HCT116 (cell line): ENCODE measurements at regions of chr10 and their contacts with region 1.

Region 1: GRCh38 chr10:91632671-91633550 is at the start of gene PPP1R3C:
- DNase-seq: no peak
- ATAC-seq: no peak
- H3K4me3 ChIP-seq: no peak within 1 kb of the TSS
- H3K27ac ChIP-seq: no peak within 1 kb of the TSS
- H3K4me1 ChIP-seq: no peaks in the 10 kb centered on the region
- H3K27me3 ChIP-seq: no peaks in the 10 kb centered on the region
- CTCF ChIP-seq: no peak
- POLR2A ChIP-seq: no peak
- RAD21 ChIP-seq: no peak
- total RNA-seq, gene PPP1R3C: 0.20 TPM

Region 2: DNA sequence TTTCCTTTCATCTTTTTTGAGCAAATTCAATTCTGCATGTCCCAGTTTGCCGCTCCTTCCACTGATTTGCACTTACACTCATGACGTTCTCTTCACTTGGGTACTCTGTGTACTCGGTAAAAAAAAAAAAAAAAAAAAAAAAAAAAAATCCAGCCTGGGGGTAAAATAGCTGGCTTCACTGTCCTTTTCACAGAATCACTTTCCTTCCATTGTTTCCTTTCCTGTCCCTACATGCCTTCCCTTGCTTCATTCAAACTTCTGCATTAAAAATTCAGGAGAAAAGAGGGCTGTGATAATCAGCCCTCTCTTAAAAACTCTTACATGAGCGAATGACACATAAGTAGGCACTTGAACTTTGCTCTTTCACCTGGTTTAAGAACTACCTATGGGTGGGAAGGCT is 720.7 kb before region 1 on chr10:
- CTCF ChIA-PET with region 1: interaction called, 5 read pairs
- POLR2A ChIA-PET with region 1: no interaction called
- RAD21 ChIA-PET with region 1: no interaction called
- intact Hi-C with region 1: loop called (anchors 10 kb)
- DNase-seq: no peak
- ATAC-seq: no peak
- H3K4me3 ChIP-seq: no peak overlapping the region
- H3K27ac ChIP-seq: no peak overlapping the region
- H3K4me1 ChIP-seq: peaks cover 0 to 2% of the 10 kb centered on the region in 2 experiments; a peak in 1 of 4 replicates
- H3K27me3 ChIP-seq: no peaks in the 10 kb centered on the region
- CTCF ChIP-seq: no peak
- POLR2A ChIP-seq: no peak
- RAD21 ChIP-seq: no peak

Region 3: GRCh38 chr10:91389636-91390512 is 243.0 kb before region 1 on chr10:
- CTCF ChIA-PET with region 1: interaction called, 11 read pairs
- POLR2A ChIA-PET with region 1: no interaction called
- RAD21 ChIA-PET with region 1: no interaction called
- intact Hi-C with region 1: loop called (anchors 2 kb)
- DNase-seq: peak; percentile 37
- ATAC-seq: peak; percentile 84
- H3K4me3 ChIP-seq: peak overlapping the region in 1 of 2 experiments; percentile 12; a peak in 1 of 4 replicates
- H3K27ac ChIP-seq: no peak overlapping the region
- H3K4me1 ChIP-seq: peaks cover 0 to 3% of the 10 kb centered on the region in 2 experiments; a peak in 1 of 4 replicates
- H3K27me3 ChIP-seq: peaks cover 21% of the 10 kb centered on the region
- CTCF ChIP-seq: peak; percentile 44 to 65 (median 65); a peak in 5 of 6 replicates
- POLR2A ChIP-seq: no peak
- RAD21 ChIP-seq: peak; percentile 65

Region 4: GRCh38 chr10:91467114-91467513 is 165.8 kb before region 1 on chr10:
- CTCF ChIA-PET with region 1: no interaction called
- POLR2A ChIA-PET with region 1: no interaction called
- RAD21 ChIA-PET with region 1: no interaction called
- intact Hi-C with region 1: no loop called
- DNase-seq: no peak
- ATAC-seq: no peak
- H3K4me3 ChIP-seq: no peak overlapping the region
- H3K27ac ChIP-seq: no peak overlapping the region
- H3K4me1 ChIP-seq: no peaks in the 10 kb centered on the region
- H3K27me3 ChIP-seq: no peaks in the 10 kb centered on the region
- CTCF ChIP-seq: no peak
- POLR2A ChIP-seq: no peak
- RAD21 ChIP-seq: no peak

Region 5: GRCh38 chr10:91551856-91552255 is 81.1 kb before region 1 on chr10:
- CTCF ChIA-PET with region 1: interaction called, 15 read pairs
- POLR2A ChIA-PET with region 1: no interaction called
- RAD21 ChIA-PET with region 1: interaction called, 3 to 9 read pairs
- intact Hi-C with region 1: loop called (anchors 1 kb)
- DNase-seq: peak; percentile 16
- ATAC-seq: peak; percentile 84
- H3K4me3 ChIP-seq: no peak overlapping the region
- H3K27ac ChIP-seq: no peak overlapping the region
- H3K4me1 ChIP-seq: no peaks in the 10 kb centered on the region
- H3K27me3 ChIP-seq: no peaks in the 10 kb centered on the region
- CTCF ChIP-seq: peak; percentile 62 to 97 (median 71)
- POLR2A ChIP-seq: no peak
- RAD21 ChIP-seq: peak; percentile 84

Region 6: GRCh38 chr10:91643700-91644099 is 10.8 kb after region 1 on chr10:
- CTCF ChIA-PET with region 1: interaction called, 25 read pairs
- POLR2A ChIA-PET with region 1: no interaction called
- RAD21 ChIA-PET with region 1: no interaction called
- intact Hi-C with region 1: no loop called
- DNase-seq: no peak
- ATAC-seq: peak; percentile 69
- H3K4me3 ChIP-seq: no peak overlapping the region
- H3K27ac ChIP-seq: no peak overlapping the region
- H3K4me1 ChIP-seq: no peaks in the 10 kb centered on the region
- H3K27me3 ChIP-seq: no peaks in the 10 kb centered on the region
- CTCF ChIP-seq: peak; percentile 35 to 50 (median 41); a peak in 5 of 6 replicates
- POLR2A ChIP-seq: no peak
- RAD21 ChIP-seq: peak; percentile 60